Left colon (tissue), 2 donors: ENCODE measurements at regions of chr6 and their contacts with region 1.

Region 1: DNA sequence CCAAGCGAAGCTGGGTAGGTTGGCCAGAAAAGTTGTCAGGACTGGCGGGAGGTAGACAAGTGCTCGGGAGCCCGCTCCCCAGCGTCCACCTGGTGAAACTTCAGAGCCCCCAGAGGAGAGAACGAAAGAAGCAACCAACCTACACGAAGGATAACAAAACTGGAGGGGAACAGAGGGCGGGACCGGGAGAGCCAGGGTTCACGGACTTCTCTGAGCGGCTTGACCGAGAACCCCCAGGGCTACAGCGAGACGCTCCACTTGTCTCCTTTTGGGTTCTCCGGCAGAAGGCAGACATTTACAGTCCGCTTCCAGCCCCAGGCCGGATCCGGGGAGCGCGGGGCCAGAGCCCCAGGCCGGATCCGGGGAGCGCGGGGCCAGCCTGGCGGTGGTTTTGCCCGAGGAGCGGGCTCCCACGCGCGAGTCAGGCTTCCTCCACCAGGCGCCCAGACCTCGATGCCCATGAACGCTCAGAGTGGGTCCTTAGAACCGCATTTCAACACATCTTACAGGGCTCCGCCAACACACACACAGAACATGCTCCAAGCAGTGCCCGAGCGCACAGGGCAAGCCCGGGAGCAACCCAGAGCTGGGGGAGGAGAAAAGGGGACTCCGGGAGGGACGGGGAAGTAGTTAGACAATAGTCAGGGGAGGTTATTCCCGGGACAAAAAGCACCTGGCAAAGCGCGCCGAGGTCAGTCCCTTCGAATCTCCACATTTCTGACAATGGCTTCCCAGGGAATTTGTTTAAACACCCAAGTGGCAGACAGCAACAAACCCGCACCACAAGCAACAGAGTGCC is 1.1 kb downstream of the PTPRK start:
- DNase-seq: peak; percentile 58
- ATAC-seq: peak; percentile 60

Region 2: DNA sequence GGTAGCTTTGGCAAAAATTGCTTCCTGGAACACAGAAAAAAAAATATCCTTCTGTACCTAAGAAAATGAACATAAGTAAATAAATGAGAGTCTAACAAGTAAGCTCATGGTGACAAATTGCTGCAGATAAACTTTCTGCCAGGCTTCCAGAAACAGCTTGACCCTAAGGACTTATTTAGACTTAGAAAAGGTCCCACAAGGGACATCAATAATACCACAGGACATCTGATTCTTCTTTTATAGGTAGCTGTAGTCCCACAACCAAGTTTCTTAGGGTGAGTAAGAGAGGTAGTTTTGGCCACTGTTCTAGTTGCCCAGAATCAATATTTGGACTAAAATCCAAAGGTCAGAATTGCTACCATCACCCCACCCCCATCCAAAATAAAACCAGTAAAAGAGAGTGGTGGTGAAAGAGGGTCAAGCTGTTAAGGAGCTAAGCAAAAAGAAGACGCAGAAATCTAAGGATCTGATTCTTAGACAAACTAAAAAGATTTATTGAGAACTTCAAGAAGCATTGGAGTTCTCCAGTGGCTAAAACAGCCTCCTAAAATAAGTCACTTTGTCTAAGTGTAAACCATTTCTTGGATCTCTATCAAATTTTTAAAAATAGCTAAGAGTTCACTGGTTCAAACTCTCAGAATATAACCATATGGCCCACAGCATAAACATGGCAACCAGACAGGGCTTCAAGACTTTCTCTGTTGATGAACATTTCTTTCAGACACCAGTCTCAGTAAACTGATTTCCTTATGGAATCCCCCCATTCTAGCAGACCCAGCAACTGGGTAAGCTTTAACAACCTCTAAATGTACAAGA is 179.5 kb before region 1 on chr6:
- intact Hi-C with region 1: loop called in 1 of 2 experiments (anchors 10 kb)
- DNase-seq: no peak
- ATAC-seq: peak; percentile 52

Region 3: DNA sequence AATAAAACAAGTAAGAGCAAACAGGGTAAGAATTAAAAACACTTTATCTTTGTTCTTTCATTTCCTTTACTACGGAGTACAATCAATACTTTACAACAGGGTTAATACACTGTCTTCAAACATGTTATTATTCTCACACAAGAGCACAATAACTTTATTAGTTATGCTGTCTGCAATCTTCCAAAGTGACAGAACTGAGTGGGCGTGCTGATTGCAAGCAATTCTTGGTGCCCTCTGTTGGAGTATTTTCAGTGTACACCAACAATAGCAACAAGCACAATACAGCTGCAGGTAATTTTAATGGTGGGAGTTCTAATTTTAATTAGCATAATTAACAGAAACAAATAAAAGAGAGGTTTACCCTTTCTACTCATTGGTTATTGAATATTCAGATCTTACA is 35.0 kb after region 1 on chr6:
- intact Hi-C with region 1: no loop called
- DNase-seq: no peak
- ATAC-seq: no peak